CD8-positive, alpha-beta memory T cell (primary cell): ENCODE measurements at regions of chr20 and their contacts with region 1.

Region 1: DNA sequence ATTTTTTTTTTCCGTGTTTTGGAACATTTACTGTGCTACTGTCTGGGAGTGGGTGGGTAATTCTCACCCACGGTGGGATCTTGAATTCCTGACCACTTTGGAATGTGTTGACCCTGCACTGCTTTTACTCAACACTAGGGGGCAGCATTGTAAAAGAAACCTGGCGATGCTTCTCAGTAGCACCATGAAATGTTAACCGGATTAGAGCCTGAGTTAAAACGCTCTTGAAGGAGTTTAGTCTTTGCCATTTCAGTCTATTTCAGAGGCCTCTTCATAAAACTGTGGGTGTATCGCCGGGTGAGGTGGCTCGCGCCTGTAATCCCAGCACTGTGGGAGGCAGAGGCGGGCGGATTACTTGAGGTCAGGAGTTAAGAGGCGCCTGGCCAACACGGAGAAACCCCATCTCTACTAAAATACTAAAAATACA is 114.4 kb upstream of the PRND start:
- DNase-seq: peak; percentile 26 to 70 (median 54)
- H3K4me3 ChIP-seq: no peak overlapping the region
- H3K4me3 Mint-ChIP-seq: no peak overlapping the region
- H3K27ac ChIP-seq: no peak overlapping the region
- H3K27ac Mint-ChIP-seq: peak overlapping the region in 1 of 8 donors; percentile 39
- H3K4me1 ChIP-seq: no peaks in the 10 kb centered on the region
- H3K4me1 Mint-ChIP-seq: no peaks in the 10 kb centered on the region
- H3K27me3 ChIP-seq: peaks cover 4% of the 10 kb centered on the region
- H3K27me3 Mint-ChIP-seq: peaks cover 17 to 36% of the 10 kb centered on the region in 2 donors

Region 2: DNA sequence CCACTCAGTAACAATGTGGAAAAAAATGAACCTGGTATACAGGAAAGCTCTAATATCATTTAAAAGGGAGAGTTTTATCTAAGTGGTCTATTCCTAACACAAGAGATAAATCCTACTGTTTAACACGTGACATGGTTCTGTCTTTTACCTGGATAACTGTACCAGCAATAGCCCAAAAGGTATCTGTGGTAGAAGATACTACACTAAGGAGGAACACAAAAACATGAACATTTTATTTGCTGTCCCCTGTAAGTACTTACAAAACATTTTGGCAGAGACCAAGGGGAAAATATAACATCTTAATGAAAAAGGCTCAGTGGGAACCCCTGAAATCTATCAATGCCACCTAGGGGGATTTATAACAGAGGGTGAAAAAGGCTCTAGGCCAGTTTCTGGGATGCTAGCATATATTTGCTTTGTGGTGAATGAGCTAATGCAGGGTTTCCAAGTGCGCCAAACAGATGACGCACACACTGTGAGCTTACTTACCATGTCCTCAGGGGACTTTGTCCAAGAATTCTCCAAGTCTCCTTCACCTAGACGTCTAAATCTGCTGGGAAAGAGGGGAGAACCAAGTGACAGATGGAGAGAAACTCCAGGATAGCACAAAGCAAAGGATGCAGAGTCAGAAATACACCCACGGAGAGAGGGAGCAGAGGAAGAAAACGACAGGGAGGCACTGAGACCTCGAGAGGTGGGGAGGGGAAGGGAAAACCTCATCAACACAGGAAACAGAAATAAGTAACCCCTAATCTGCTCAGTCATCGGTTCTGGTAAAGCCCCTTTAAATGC is 33.5 kb before region 1 on chr20:
- CTCF ChIA-PET with region 1: no interaction called
- POLR2A ChIA-PET with region 1: no interaction called
- DNase-seq: no peak
- H3K4me3 ChIP-seq: no peak overlapping the region
- H3K4me3 Mint-ChIP-seq: no peak overlapping the region
- H3K27ac ChIP-seq: no peak overlapping the region
- H3K27ac Mint-ChIP-seq: no peak overlapping the region
- H3K4me1 ChIP-seq: no peaks in the 10 kb centered on the region
- H3K4me1 Mint-ChIP-seq: no peaks in the 10 kb centered on the region
- H3K27me3 ChIP-seq: no peaks in the 10 kb centered on the region
- H3K27me3 Mint-ChIP-seq: peaks cover 14 to 75% of the 10 kb centered on the region in 2 donors

Region 3: DNA sequence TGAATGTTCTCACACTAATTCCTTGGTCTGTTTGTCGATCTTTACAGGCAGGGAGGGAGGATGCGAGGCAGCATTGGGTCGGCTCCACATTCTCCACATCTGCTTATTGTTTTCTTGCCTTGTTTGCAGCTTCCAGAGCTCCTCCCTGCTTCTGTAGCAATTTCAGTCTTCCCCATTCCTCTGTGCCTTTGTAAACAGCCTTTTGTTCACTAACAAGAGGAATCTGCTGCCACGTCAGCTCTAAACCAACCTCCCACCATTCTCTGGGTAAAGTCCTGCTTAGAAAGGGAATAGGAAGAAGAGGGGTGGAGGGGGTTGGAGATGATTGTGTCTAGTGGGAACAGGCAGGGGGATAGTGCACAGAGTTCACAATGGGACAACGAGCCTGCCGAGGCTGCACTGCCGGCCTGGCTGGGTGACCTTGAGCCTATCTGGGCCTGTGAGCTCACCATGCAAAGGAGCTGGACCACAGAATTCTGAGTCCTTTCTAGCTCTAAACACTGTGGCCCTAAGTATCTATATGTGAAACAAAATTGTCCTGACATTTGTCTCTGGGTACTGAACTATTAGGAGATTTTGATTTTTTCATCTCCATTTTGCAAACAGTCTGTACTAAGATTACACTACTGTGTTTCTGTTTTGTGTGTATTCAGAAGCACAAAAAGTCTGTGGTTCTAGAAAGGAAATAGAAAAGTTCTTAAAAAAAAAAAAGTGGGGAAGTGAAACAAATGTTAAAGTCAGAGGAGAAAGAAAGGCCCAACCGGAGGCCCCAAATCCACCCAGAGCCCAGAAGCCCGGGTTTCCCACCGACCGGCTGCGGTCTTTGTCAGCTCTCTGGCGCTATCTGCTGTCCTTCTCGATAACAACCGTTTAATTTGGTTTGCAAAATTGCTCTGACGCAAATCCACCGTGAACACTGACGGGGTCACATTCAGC is 113.0 kb after region 1 on chr20:
- CTCF ChIA-PET with region 1: interaction called, 166 read pairs
- POLR2A ChIA-PET with region 1: no interaction called
- DNase-seq: peak; percentile 57 to 80 (median 70)
- H3K4me3 ChIP-seq: no peak overlapping the region
- H3K4me3 Mint-ChIP-seq: peak overlapping the region in 1 of 7 donors; percentile 21
- H3K27ac ChIP-seq: no peak overlapping the region
- H3K27ac Mint-ChIP-seq: peak overlapping the region in 6 of 8 donors; percentile 2 to 89 (median 26)
- H3K4me1 ChIP-seq: peaks cover 7% of the 10 kb centered on the region
- H3K4me1 Mint-ChIP-seq: peaks cover 8 to 12% (median 10%) of the 10 kb centered on the region in 3 donors
- H3K27me3 ChIP-seq: no peaks in the 10 kb centered on the region
- H3K27me3 Mint-ChIP-seq: peaks cover 3 to 4% of the 10 kb centered on the region in 2 donors